Activated CD4-positive, alpha-beta T cell treated with anti-CD3 and anti-CD28 coated beads for 36 hours (primary cell): ENCODE measurements at regions of chr15 and their contacts with region 1.

Region 1: GRCh38 chr15:38699633-38700230 is 135.1 kb upstream of the RASGRP1 start:
- DNase-seq: peak; percentile 83
- ATAC-seq: peak; percentile 51
- H3K4me3 Mint-ChIP-seq: no peak overlapping the region
- H3K27ac Mint-ChIP-seq: peak overlapping the region; percentile 67
- H3K4me1 Mint-ChIP-seq: peaks cover 53% of the 10 kb centered on the region
- H3K27me3 Mint-ChIP-seq: no peaks in the 10 kb centered on the region

Region 2: DNA sequence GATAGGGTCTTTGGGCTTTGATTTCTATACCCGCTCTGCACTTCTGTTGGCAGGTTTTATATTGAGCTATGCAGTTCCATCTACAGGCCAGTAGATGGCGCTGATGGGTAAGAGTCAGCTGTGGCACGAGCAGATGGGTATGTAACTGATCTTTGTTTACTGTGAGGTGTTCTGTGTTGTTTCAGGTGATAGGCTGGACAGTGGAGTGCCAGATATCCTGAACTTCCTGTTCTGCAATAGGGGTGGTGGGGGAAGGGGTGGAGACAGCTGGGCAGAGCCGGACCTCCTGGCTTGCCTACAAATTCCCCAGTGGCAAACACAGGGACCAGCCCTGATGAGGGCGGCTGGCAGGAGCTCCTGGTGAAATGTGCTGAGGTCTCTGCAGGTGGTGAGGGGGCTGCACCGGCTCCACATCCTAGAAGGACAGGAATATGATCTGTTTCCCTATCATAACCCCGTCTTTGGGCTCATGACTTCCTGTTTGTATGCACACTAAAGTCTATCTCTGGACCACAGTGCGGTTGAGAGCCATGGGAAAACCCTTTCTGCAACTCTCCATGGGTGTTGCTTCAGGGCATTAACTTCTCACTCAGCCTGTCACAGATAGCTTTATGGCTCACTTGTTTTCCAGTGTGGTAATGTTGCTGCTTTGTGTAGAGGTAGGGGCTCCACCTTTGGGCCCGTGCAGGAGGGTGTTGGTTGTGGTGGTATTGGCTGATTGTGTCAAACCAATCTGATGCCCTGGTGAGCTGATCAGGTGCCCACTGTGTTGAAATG is 259.2 kb before region 1 on chr15:
- CTCF ChIA-PET with region 1: interaction called, 154 read pairs
- POLR2A ChIA-PET with region 1: interaction called, 3 read pairs
- intact Hi-C with region 1: loop called (anchors 1 kb)
- DNase-seq: peak; percentile 67
- ATAC-seq: peak; percentile 90
- H3K4me3 Mint-ChIP-seq: no peak overlapping the region
- H3K27ac Mint-ChIP-seq: peak overlapping the region; percentile 23
- H3K4me1 Mint-ChIP-seq: peaks cover 5% of the 10 kb centered on the region
- H3K27me3 Mint-ChIP-seq: peaks cover 14% of the 10 kb centered on the region

Region 3: GRCh38 chr15:38461066-38461833 is 238.5 kb before region 1 on chr15:
- CTCF ChIA-PET with region 1: interaction called, 19 read pairs
- POLR2A ChIA-PET with region 1: no interaction called
- intact Hi-C with region 1: no loop called
- DNase-seq: no peak
- ATAC-seq: peak; percentile 76
- H3K4me3 Mint-ChIP-seq: no peak overlapping the region
- H3K27ac Mint-ChIP-seq: no peak overlapping the region
- H3K4me1 Mint-ChIP-seq: peaks cover 47% of the 10 kb centered on the region
- H3K27me3 Mint-ChIP-seq: no peaks in the 10 kb centered on the region

Region 4: GRCh38 chr15:38479266-38479665 is 220.5 kb before region 1 on chr15:
- CTCF ChIA-PET with region 1: interaction called, 42 read pairs
- POLR2A ChIA-PET with region 1: no interaction called
- intact Hi-C with region 1: loop called in 1 of 2 experiments (anchors 1 kb)
- DNase-seq: no peak
- ATAC-seq: no peak
- H3K4me3 Mint-ChIP-seq: no peak overlapping the region
- H3K27ac Mint-ChIP-seq: no peak overlapping the region
- H3K4me1 Mint-ChIP-seq: peaks cover 27% of the 10 kb centered on the region
- H3K27me3 Mint-ChIP-seq: no peaks in the 10 kb centered on the region

Region 5: GRCh38 chr15:38496151-38496550 is 203.6 kb before region 1 on chr15:
- CTCF ChIA-PET with region 1: interaction called, 27 read pairs
- POLR2A ChIA-PET with region 1: no interaction called
- intact Hi-C with region 1: no loop called
- DNase-seq: no peak
- ATAC-seq: no peak
- H3K4me3 Mint-ChIP-seq: no peak overlapping the region
- H3K27ac Mint-ChIP-seq: peak overlapping the region; percentile 77
- H3K4me1 Mint-ChIP-seq: peaks cover 34% of the 10 kb centered on the region
- H3K27me3 Mint-ChIP-seq: no peaks in the 10 kb centered on the region

Region 6: GRCh38 chr15:38545179-38545578 is 154.6 kb before region 1 on chr15:
- CTCF ChIA-PET with region 1: interaction called, 10 read pairs
- POLR2A ChIA-PET with region 1: no interaction called
- intact Hi-C with region 1: no loop called
- DNase-seq: no peak
- ATAC-seq: no peak
- H3K4me3 Mint-ChIP-seq: no peak overlapping the region
- H3K27ac Mint-ChIP-seq: peak overlapping the region; percentile 53
- H3K4me1 Mint-ChIP-seq: peaks cover 94% of the 10 kb centered on the region
- H3K27me3 Mint-ChIP-seq: no peaks in the 10 kb centered on the region

Region 7: GRCh38 chr15:38647683-38648082 is 52.0 kb before region 1 on chr15:
- CTCF ChIA-PET with region 1: interaction called, 5 read pairs
- POLR2A ChIA-PET with region 1: interaction called, 12 read pairs
- intact Hi-C with region 1: no loop called
- DNase-seq: no peak
- ATAC-seq: no peak
- H3K4me3 Mint-ChIP-seq: no peak overlapping the region
- H3K27ac Mint-ChIP-seq: peak overlapping the region; percentile 34
- H3K4me1 Mint-ChIP-seq: peaks cover 75% of the 10 kb centered on the region
- H3K27me3 Mint-ChIP-seq: no peaks in the 10 kb centered on the region

Region 8: GRCh38 chr15:38788918-38789317 is 89.2 kb after region 1 on chr15:
- CTCF ChIA-PET with region 1: no interaction called
- POLR2A ChIA-PET with region 1: no interaction called
- intact Hi-C with region 1: no loop called
- DNase-seq: no peak
- ATAC-seq: no peak
- H3K4me3 Mint-ChIP-seq: no peak overlapping the region
- H3K27ac Mint-ChIP-seq: no peak overlapping the region
- H3K4me1 Mint-ChIP-seq: no peaks in the 10 kb centered on the region
- H3K27me3 Mint-ChIP-seq: no peaks in the 10 kb centered on the region

Region 9: DNA sequence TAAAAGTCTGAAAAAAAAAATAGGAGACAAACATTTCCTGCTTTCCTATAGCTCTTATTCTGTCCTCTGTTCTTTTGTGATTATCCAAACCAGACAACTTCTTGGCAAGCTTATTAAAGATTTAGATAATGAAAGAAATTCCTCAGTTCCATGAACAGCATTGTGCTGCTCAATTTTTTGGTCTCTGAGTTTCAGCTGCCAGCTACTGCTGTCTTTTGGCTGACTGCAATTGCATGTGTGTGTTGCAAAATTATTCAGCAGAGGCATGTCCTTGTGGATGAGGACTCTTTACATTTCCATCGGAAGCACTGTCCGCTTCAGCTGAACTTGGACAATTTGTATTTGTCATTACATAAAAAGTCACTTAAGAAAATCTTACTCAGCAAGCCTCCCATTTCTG is 262.2 kb after region 1 on chr15:
- CTCF ChIA-PET with region 1: no interaction called
- POLR2A ChIA-PET with region 1: no interaction called
- intact Hi-C with region 1: no loop called
- DNase-seq: no peak
- ATAC-seq: no peak
- H3K4me3 Mint-ChIP-seq: no peak overlapping the region
- H3K27ac Mint-ChIP-seq: no peak overlapping the region
- H3K4me1 Mint-ChIP-seq: no peaks in the 10 kb centered on the region
- H3K27me3 Mint-ChIP-seq: peaks cover 1% of the 10 kb centered on the region